HEK293 (cell line): ENCODE measurements at regions of chr5 and their contacts with region 1.

Region 1: GRCh38 chr5:170747851-170748250 is 35.7 kb upstream of the GABRP start:
- H3K4me3 ChIP-seq: no peak overlapping the region
- H3K27ac ChIP-seq: no peak overlapping the region
- H3K4me1 ChIP-seq: no peaks in the 10 kb centered on the region
- CTCF ChIP-seq: peak; percentile 51

Region 2: GRCh38 chr5:170319301-170319700 is 428.6 kb before region 1 on chr5:
- CTCF ChIA-PET with region 1: no interaction called
- POLR2A ChIA-PET with region 1: no interaction called
- H3K4me3 ChIP-seq: no peak overlapping the region
- H3K27ac ChIP-seq: no peak overlapping the region
- H3K4me1 ChIP-seq: no peaks in the 10 kb centered on the region
- CTCF ChIP-seq: no peak

Region 3: DNA sequence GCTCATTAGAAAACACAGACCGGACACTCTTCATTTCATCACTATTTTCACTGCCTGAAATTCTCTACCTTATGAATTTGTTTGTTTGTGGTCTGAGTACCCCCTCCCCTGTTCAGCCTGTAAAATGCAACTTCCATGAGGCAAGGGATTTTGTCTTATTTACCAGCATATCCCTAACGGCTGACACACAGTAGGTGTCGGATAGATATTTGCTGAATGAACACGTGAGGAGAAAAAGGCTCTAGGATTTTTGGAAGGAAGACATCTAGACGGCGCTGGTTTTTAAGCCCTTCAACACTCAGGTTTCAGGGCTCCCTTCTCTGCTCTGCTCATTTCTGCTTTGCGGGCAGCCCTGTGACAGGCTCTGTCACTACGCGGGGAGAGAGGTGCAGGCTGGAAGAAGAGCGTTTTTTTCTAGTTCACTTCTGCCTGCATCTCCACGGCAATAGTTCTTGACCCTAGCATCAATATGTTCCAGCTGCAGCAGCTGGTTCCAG is 399.7 kb before region 1 on chr5:
- CTCF ChIA-PET with region 1: no interaction called
- POLR2A ChIA-PET with region 1: no interaction called
- H3K4me3 ChIP-seq: no peak overlapping the region
- H3K27ac ChIP-seq: no peak overlapping the region
- H3K4me1 ChIP-seq: no peaks in the 10 kb centered on the region
- CTCF ChIP-seq: no peak

Region 4: DNA sequence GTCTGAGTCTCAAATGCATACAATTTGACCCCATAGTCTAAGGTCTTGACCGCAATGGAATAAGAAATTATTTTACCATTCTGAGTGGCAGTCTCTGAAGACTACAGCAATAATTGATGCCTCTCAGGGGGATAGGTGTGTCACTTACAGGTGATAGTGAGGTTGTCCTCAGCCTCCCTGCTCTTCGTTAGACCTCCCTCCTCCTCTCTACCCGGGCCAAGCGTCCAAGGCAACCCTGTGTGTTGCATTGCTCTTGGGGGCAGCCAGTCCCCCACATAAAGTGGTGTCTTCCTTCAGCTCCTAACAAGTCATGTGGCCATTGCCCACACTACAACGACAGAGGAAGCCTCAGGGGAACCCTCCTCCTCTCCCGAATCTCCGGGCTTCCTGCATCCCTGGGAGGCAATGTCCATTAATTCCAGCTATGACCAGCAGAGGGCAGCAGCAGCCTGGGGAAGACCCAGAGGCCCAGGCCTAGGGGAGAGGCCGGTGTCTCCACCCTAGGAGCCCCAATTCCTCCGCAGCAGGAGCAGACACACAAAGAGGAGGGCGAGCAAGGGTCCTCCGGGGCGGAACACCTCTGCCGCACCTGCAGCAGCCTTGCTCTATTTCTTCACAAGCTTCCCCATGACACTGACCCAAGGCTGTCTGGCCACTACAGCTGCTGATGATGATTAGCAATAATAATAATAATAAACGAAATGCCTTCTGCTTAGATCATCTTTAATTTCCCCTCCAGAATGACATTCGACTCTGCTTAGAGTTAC is 109.2 kb before region 1 on chr5:
- CTCF ChIA-PET with region 1: interaction called, 11 read pairs
- POLR2A ChIA-PET with region 1: no interaction called
- H3K4me3 ChIP-seq: no peak overlapping the region
- H3K27ac ChIP-seq: no peak overlapping the region
- H3K4me1 ChIP-seq: peaks cover 6% of the 10 kb centered on the region
- CTCF ChIP-seq: peak; percentile 80

Region 5: GRCh38 chr5:170691657-170692056 is 56.2 kb before region 1 on chr5:
- CTCF ChIA-PET with region 1: interaction called, 10 read pairs
- POLR2A ChIA-PET with region 1: no interaction called
- H3K4me3 ChIP-seq: no peak overlapping the region
- H3K27ac ChIP-seq: no peak overlapping the region
- H3K4me1 ChIP-seq: no peaks in the 10 kb centered on the region
- CTCF ChIP-seq: 0 out of 2 replicates have a peak, but pooled peaks have one; percentile 14

Region 6: GRCh38 chr5:170782438-170782837 is 34.6 kb after region 1 on chr5:
- CTCF ChIA-PET with region 1: interaction called, 253 read pairs
- POLR2A ChIA-PET with region 1: no interaction called
- H3K4me3 ChIP-seq: no peak overlapping the region
- H3K27ac ChIP-seq: no peak overlapping the region
- H3K4me1 ChIP-seq: peaks cover 7% of the 10 kb centered on the region
- CTCF ChIP-seq: no peak

Region 7: GRCh38 chr5:170791325-170791954 is 43.6 kb after region 1 on chr5:
- CTCF ChIA-PET with region 1: interaction called, 253 read pairs
- POLR2A ChIA-PET with region 1: interaction called, 6 read pairs
- H3K4me3 ChIP-seq: no peak overlapping the region
- H3K27ac ChIP-seq: no peak overlapping the region
- H3K4me1 ChIP-seq: no peaks in the 10 kb centered on the region
- CTCF ChIP-seq: peak; percentile 69